T-cell (primary cell): ENCODE measurements at regions of chr3 and their contacts with region 1.

Region 1: GRCh38 chr3:52774066-52774713 is 3.2 kb upstream of the ITIH1 start:
- DNase-seq: no peak
- ATAC-seq: no peak
- H3K4me3 ChIP-seq: no peak overlapping the region
- H3K4me3 Mint-ChIP-seq: no peak overlapping the region
- H3K27ac ChIP-seq: no peak overlapping the region
- H3K27ac Mint-ChIP-seq: no peak overlapping the region
- H3K4me1 ChIP-seq: peaks cover 3 to 17% of the 10 kb centered on the region in 2 experiments
- H3K4me1 Mint-ChIP-seq: peaks cover 18 to 23% (median 22%) of the 10 kb centered on the region in 3 donors
- H3K27me3 ChIP-seq: peaks cover 0 to 11% of the 10 kb centered on the region in 2 experiments
- H3K27me3 Mint-ChIP-seq: peaks cover 2 to 3% of the 10 kb centered on the region in 2 donors

Region 2: GRCh38 chr3:52792961-52793695 is 18.9 kb after region 1 on chr3:
- CTCF ChIA-PET with region 1: no interaction called
- POLR2A ChIA-PET with region 1: no interaction called
- DNase-seq: no peak
- ATAC-seq: no peak
- H3K4me3 ChIP-seq: no peak overlapping the region
- H3K4me3 Mint-ChIP-seq: no peak overlapping the region
- H3K27ac ChIP-seq: no peak overlapping the region
- H3K27ac Mint-ChIP-seq: no peak overlapping the region
- H3K4me1 ChIP-seq: no peaks in the 10 kb centered on the region
- H3K4me1 Mint-ChIP-seq: no peaks in the 10 kb centered on the region
- H3K27me3 ChIP-seq: peaks cover 0 to 25% of the 10 kb centered on the region in 2 experiments
- H3K27me3 Mint-ChIP-seq: no peaks in the 10 kb centered on the region

Region 3: GRCh38 chr3:52809662-52810377 is 35.6 kb after region 1 on chr3:
- CTCF ChIA-PET with region 1: no interaction called
- POLR2A ChIA-PET with region 1: no interaction called
- DNase-seq: no peak
- ATAC-seq: peak in 2 of 4 experiments; percentile 24 to 44
- H3K4me3 ChIP-seq: no peak overlapping the region
- H3K4me3 Mint-ChIP-seq: no peak overlapping the region
- H3K27ac ChIP-seq: no peak overlapping the region
- H3K27ac Mint-ChIP-seq: no peak overlapping the region
- H3K4me1 ChIP-seq: no peaks in the 10 kb centered on the region
- H3K4me1 Mint-ChIP-seq: peaks cover 4 to 12% (median 8%) of the 10 kb centered on the region in 3 donors
- H3K27me3 ChIP-seq: peaks cover 0 to 7% of the 10 kb centered on the region in 2 experiments
- H3K27me3 Mint-ChIP-seq: no peaks in the 10 kb centered on the region

Region 4: GRCh38 chr3:52889901-52890300 is 115.7 kb after region 1 on chr3:
- CTCF ChIA-PET with region 1: interaction called in 1 of 2 experiments, 3 read pairs
- POLR2A ChIA-PET with region 1: interaction called in 1 of 2 experiments, 13 read pairs
- DNase-seq: no peak
- ATAC-seq: no peak
- H3K4me3 ChIP-seq: no peak overlapping the region
- H3K4me3 Mint-ChIP-seq: no peak overlapping the region
- H3K27ac ChIP-seq: no peak overlapping the region
- H3K27ac Mint-ChIP-seq: no peak overlapping the region
- H3K4me1 ChIP-seq: peaks cover 4 to 33% of the 10 kb centered on the region in 2 experiments
- H3K4me1 Mint-ChIP-seq: peaks cover 39 to 58% (median 57%) of the 10 kb centered on the region in 3 donors
- H3K27me3 ChIP-seq: no peaks in the 10 kb centered on the region
- H3K27me3 Mint-ChIP-seq: no peaks in the 10 kb centered on the region